ENCODE measurements at regions of chr6 and their contacts with region 1.

Region 1: DNA sequence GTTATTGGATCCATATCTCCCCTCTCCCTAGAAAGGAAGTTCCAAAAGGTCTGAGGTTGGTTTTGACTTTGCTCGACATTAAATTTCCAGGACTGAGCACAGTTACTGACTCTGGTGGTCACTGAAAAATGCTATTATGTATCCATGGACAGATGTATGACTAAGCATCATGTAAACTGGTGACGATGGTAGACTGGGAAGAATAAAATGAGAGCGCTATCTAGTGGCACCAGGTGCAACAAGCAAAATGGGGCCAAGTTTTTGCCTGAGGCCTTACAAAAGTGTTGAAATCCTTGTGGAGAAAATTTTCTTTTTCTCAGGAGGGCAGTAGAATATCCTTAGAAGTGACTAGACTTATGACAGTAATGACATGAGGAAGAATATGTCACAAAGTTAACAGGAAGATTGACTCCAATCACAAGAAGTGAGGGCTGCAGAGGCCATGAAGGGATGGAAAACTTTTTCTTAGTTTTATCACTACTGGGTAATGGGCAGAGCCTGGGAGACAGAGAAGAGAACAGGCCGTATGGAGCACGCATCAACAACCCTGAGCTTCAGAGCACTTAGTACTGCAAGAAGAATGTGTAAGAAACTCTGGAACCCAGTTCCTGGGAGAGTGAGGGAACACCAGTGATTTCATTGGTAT is 88.9 kb upstream of the ELOVL5 start:
- DNase-seq: peak; percentile 75
- H3K4me3 ChIP-seq: no peak overlapping the region
- H3K27ac ChIP-seq: no peak overlapping the region
- H3K4me1 ChIP-seq: peaks cover 2% of the 10 kb centered on the region
- H3K27me3 ChIP-seq: no peaks in the 10 kb centered on the region
- CTCF ChIP-seq: peak; percentile 67 to 74

Region 2: GRCh38 chr6:53179961-53180651 is 257.6 kb before region 1 on chr6:
- CTCF ChIA-PET with region 1: no interaction called
- dilution Hi-C with region 1: no loop called
- in situ Hi-C with region 1: loop called in 1 of 2 experiments (anchors 25 kb)
- intact Hi-C with region 1: no loop called
- DNase-seq: peak; percentile 7
- H3K4me3 ChIP-seq: no peak overlapping the region
- H3K27ac ChIP-seq: no peak overlapping the region
- H3K4me1 ChIP-seq: no peaks in the 10 kb centered on the region
- H3K27me3 ChIP-seq: no peaks in the 10 kb centered on the region
- CTCF ChIP-seq: no peak

Region 3: DNA sequence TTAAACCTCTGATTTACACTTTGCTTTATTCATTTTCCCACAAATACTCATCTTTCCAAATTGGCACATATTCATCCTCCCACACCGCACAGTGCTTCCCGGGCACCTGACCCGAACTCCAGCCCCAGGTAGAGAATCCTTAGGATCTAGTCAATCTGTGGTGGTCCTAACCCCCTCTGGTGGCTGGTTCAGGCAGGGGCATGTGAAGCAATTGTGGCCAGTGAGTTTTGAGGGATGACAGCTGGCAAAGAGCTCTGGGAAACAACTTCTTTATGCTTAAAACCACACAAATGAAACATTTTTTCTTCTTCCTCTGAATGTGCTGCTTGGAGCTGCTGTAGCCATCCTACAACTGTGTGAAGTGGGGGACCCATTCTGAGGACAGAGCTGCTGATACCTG is 143.6 kb before region 1 on chr6:
- CTCF ChIA-PET with region 1: interaction called, 4 read pairs
- dilution Hi-C with region 1: no loop called
- in situ Hi-C with region 1: no loop called
- intact Hi-C with region 1: loop called (anchors 2 kb)
- DNase-seq: no peak
- H3K4me3 ChIP-seq: no peak overlapping the region
- H3K27ac ChIP-seq: no peak overlapping the region
- H3K4me1 ChIP-seq: peaks cover 16% of the 10 kb centered on the region
- H3K27me3 ChIP-seq: no peaks in the 10 kb centered on the region
- CTCF ChIP-seq: peak in 1 of 2 donors; percentile 37

Measured in mammary epithelial cell (primary cell).